OCI-LY7 (cell line): ENCODE measurements at regions of chr12 and their contacts with region 1.

Region 1: DNA sequence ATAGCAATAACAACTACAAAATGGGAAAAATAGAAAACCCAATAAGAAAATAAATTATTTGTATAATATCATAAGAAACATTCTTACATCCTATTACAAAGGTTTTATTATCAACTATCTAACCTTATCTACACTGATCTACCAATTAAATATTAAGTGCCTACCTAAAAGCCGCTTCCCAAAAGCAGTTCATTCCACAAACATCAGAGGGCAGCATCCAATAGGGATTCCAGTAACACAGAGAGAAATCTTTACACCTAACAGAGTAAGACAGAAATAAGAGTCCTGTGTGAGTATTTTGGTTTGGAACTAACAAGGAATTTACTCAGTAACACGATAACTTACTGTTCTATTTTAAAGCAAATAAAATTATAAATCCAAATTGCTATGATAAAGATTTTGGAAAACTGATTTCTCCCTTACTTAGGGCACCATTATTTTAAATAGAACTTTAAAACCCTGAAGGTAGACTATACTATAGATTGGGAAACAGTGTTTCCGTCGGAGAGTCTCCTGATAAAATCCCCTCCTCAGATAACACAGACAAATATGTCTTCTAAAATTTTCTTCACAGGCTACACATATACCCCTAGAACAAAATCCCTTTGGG is 15.0 kb downstream of the GXYLT1 start:
- DNase-seq: peak; percentile 29
- H3K4me3 ChIP-seq: no peak overlapping the region
- H3K27ac ChIP-seq: no peak overlapping the region
- H3K4me1 ChIP-seq: no peaks in the 10 kb centered on the region
- CTCF ChIP-seq: peak; percentile 83

Region 2: DNA sequence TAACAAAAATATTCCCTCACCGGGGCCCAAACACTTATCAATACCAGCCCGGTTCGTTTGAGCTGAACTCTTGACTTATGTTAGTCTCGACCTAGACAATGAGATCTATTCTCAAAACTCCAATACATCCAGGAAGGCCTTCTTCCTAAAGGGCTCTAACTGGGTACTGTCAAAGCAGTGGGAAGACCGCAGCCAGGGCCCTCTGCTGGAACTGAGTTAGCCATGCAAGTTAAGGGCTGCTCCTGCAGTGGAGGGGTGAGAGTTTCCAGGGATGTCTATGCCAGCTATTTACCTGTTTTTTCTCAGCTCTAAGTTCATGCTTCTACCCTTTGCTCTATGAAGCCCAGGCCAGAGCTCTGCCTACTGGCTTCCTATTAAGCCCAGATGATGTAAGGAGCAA is 333.8 kb before region 1 on chr12:
- CTCF ChIA-PET with region 1: no interaction called
- POLR2A ChIA-PET with region 1: no interaction called
- intact Hi-C with region 1: no loop called
- DNase-seq: no peak
- H3K4me3 ChIP-seq: no peak overlapping the region
- H3K27ac ChIP-seq: no peak overlapping the region
- H3K4me1 ChIP-seq: no peaks in the 10 kb centered on the region
- CTCF ChIP-seq: peak; percentile 52; the same call in 1 of the 2 replicates

Region 3: DNA sequence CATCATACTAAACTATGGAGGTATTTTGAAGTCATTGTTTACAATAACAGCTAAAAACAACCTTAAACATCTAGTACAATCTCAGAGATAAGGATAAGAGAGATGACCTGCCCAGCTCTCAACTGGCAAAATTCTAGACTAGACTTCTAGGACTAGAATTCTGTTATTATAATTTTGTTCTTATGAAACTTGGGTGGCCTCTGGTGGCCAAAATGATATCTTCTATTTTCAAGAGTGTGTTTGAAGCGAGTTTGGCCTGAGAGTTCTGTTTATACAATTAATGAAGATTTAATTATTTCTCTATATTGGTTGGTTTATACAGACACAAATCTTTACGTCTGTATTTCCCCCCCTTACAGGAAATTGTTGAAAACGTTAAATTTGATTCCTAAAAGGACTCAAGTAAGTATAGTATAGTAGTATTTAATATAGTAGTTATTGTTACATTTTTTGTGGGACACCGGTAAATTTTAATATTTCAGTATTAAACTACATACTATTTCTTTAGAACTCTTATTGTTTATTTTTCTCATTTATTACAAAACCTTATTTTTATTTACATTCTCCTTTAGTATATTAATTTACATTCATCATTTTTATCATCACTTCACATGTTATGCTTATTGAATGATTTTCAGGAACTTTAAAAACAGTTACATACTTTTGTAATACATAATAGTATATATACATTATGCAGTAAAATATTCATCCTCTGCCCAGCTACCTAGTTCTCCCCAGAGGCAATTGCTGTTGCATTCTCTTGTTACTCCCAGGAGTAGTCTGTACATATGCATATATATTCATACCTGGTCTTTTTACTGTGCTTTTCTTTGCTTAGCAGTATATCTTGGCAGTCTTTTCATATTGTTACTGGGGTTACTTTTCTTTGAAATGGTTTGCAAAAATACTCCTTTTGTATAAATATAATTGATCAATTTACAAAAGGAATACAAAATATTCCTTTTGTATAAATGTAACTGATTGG is 202.9 kb after region 1 on chr12:
- CTCF ChIA-PET with region 1: no interaction called
- POLR2A ChIA-PET with region 1: no interaction called
- intact Hi-C with region 1: loop called (anchors 2 kb)
- DNase-seq: peak; percentile 58
- H3K4me3 ChIP-seq: no peak overlapping the region
- H3K27ac ChIP-seq: no peak overlapping the region
- H3K4me1 ChIP-seq: peaks cover 40% of the 10 kb centered on the region
- CTCF ChIP-seq: peak; percentile 88

Region 4: GRCh38 chr12:42372154-42372791 is 242.6 kb after region 1 on chr12:
- CTCF ChIA-PET with region 1: no interaction called
- POLR2A ChIA-PET with region 1: interaction called, 3 read pairs
- intact Hi-C with region 1: loop called (anchors 5 kb)
- DNase-seq: peak; percentile 76
- H3K4me3 ChIP-seq: no peak overlapping the region
- H3K27ac ChIP-seq: no peak overlapping the region
- H3K4me1 ChIP-seq: no peaks in the 10 kb centered on the region
- CTCF ChIP-seq: peak; percentile 91

Region 5: GRCh38 chr12:42407306-42407705 is 277.6 kb after region 1 on chr12:
- CTCF ChIA-PET with region 1: no interaction called
- POLR2A ChIA-PET with region 1: interaction called, 10 read pairs
- intact Hi-C with region 1: no loop called
- DNase-seq: no peak
- H3K4me3 ChIP-seq: no peak overlapping the region
- H3K27ac ChIP-seq: no peak overlapping the region
- H3K4me1 ChIP-seq: no peaks in the 10 kb centered on the region
- CTCF ChIP-seq: no peak

Region 6: DNA sequence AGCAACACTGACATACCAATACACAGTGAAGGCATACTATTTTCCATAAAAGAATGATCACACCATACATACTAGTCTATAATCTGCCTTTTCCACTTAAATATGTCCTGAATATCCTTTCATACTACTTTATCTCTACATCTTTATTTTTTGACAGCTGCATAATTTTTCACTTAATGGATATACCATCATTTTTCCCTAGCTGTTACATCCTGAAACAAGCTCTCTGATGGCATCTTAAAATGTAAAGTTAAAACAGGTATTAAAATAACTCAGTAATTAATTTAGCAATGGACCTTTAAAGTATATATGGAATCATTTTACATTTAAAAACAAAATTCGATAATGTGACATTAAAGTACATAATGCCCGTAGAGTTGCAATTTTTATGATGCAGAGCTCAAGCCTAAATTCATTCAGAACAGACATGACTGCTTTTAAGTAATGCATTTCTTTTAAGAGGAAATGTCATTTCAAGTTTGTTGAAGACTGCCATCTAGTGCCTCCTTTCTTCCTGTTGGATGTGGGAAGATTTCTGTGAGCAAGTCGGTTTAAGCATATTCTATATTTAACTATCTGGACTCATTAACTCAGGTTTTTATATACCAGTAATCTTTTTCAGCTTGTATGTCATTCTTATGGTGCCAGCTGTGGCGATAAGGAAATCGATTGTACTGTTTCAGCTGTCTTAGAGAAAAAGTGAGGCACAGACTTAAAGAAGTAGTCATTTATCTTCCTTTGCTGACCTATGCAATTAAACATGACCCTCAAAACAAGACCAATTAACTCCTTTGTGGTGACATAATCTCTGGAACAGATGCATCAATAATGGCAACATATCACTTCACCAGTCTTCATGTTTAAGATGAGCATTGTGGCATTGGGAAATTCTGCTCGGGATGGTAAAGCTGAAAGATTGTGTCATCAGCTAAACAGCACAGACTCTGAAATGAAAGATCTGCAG is 439.5 kb after region 1 on chr12:
- CTCF ChIA-PET with region 1: no interaction called
- POLR2A ChIA-PET with region 1: no interaction called
- intact Hi-C with region 1: loop called (anchors 10 kb)
- DNase-seq: peak; percentile 63
- H3K4me3 ChIP-seq: no peak overlapping the region
- H3K27ac ChIP-seq: no peak overlapping the region
- H3K4me1 ChIP-seq: no peaks in the 10 kb centered on the region
- CTCF ChIP-seq: peak; percentile 84